ENCODE measurements at regions of chr6 and their contacts with region 1.

Region 1: GRCh38 chr6:4381381-4381780 is 246.0 kb upstream of the ECI2 start:
- DNase-seq: no peak
- H3K4me3 ChIP-seq: no peak overlapping the region
- H3K27ac ChIP-seq: no peak overlapping the region
- H3K4me1 ChIP-seq: no peaks in the 10 kb centered on the region
- H3K27me3 ChIP-seq: no peaks in the 10 kb centered on the region
- CTCF ChIP-seq: no peak
- POLR2A ChIP-seq: no peak

Region 2: GRCh38 chr6:3489027-3489757 is 892.2 kb before region 1 on chr6:
- intact Hi-C with region 1: loop called (anchors 10 kb)
- DNase-seq: no peak
- H3K4me3 ChIP-seq: no peak overlapping the region
- H3K27ac ChIP-seq: no peak overlapping the region
- H3K4me1 ChIP-seq: no peaks in the 10 kb centered on the region
- H3K27me3 ChIP-seq: no peaks in the 10 kb centered on the region
- CTCF ChIP-seq: no peak
- POLR2A ChIP-seq: no peak

Region 3: DNA sequence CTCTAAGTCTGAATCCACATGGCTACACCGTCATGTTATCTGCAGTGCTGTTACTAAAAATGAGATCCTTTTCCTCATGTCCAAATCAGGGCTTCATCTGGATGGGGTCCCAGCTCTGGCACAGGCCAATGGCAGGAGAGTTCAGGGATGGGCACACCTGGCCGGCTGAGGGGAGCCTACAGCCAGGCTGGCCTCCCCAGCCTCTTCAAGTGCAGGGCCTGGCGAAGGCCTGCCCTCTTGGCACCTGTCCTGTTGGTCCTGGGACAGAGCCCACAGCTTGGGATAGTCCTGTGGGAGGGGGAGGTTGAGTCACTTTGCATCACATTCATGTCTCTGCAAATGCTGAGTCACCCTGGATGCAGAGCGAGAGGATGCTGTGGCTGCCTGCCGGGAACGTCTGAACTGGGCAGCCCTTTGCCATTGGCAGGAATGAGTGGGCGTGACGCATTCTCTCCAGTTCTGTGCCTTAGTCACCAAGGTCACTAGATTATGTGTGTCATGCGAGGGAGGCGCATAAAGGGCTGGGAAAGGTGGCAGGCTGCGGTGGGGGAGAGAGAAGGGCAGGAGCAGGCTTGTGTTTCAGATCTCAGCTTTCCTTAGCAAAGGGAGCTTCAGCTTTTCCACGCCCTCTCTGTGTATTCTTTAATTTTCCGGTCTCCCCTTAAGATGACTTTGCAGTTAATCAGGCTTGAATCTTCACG is 22.8 kb before region 1 on chr6:
- intact Hi-C with region 1: no loop called
- DNase-seq: peak; percentile 85 to 96
- H3K4me3 ChIP-seq: peak overlapping the region in 1 of 3 donors; percentile 22
- H3K27ac ChIP-seq: peak overlapping the region; percentile 85 to 92
- H3K4me1 ChIP-seq: peaks cover 0 to 3% of the 10 kb centered on the region in 2 donors
- H3K27me3 ChIP-seq: no peaks in the 10 kb centered on the region
- CTCF ChIP-seq: no peak
- POLR2A ChIP-seq: no peak

Measured in breast epithelium (tissue), 4 donors.